H1 (cell line): ENCODE measurements at regions of chr14 and their contacts with region 1.

Region 1: GRCh38 chr14:24431569-24432258 is 2.0 kb downstream of the KHNYN start:
- DNase-seq: peak; percentile 95 to 96
- H3K4me3 ChIP-seq: peak overlapping the region in 1 of 4 experiments; percentile 76; a peak in 2 of 8 replicates
- H3K27ac ChIP-seq: no peak overlapping the region
- H3K4me1 ChIP-seq: peaks cover 6 to 21% (median 15%) of the 10 kb centered on the region in 4 experiments
- H3K27me3 ChIP-seq: peaks cover 0 to 17% (median 1%) of the 10 kb centered on the region in 4 experiments; a peak in 3 of 7 replicates
- CTCF ChIP-seq: peak; percentile 87 to 100 (median 99)
- EP300 ChIP-seq: no peak
- POLR2A ChIP-seq: no peak
- RAD21 ChIP-seq: peak; percentile 96 to 98

Region 2: GRCh38 chr14:24332268-24332993 is 99.3 kb before region 1 on chr14:
- CTCF ChIA-PET with region 1: interaction called, 664 read pairs
- POLR2A ChIA-PET with region 1: interaction called, 46 read pairs
- DNase-seq: peak; percentile 34 to 89
- H3K4me3 ChIP-seq: peak overlapping the region; percentile 32 to 62 (median 52)
- H3K27ac ChIP-seq: no peak overlapping the region
- H3K4me1 ChIP-seq: peaks cover 0 to 16% (median 9%) of the 10 kb centered on the region in 4 experiments; a peak in 5 of 7 replicates
- H3K27me3 ChIP-seq: peaks cover 39 to 85% (median 59%) of the 10 kb centered on the region in 4 experiments
- CTCF ChIP-seq: peak in 2 of 3 experiments; percentile 56 to 79; a peak in 3 of 4 replicates
- EP300 ChIP-seq: no peak
- POLR2A ChIP-seq: no peak
- RAD21 ChIP-seq: peak; percentile 50 to 54

Region 3: GRCh38 chr14:24366721-24367513 is 64.8 kb before region 1 on chr14:
- CTCF ChIA-PET with region 1: interaction called, 207 read pairs
- POLR2A ChIA-PET with region 1: interaction called, 14 read pairs
- DNase-seq: peak in 1 of 2 experiments; percentile 94
- H3K4me3 ChIP-seq: peak overlapping the region; percentile 48 to 100 (median 75)
- H3K27ac ChIP-seq: peak overlapping the region; percentile 28; the same call in 1 of the 2 replicates
- H3K4me1 ChIP-seq: peaks cover 0 to 10% (median 6%) of the 10 kb centered on the region in 4 experiments; a peak in 5 of 7 replicates
- H3K27me3 ChIP-seq: peaks cover 0 to 3% (median 2%) of the 10 kb centered on the region in 4 experiments; a peak in 2 of 7 replicates
- CTCF ChIP-seq: no peak
- EP300 ChIP-seq: no peak
- POLR2A ChIP-seq: no peak
- RAD21 ChIP-seq: no peak

Region 4: GRCh38 chr14:24392325-24393091 is 39.2 kb before region 1 on chr14:
- CTCF ChIA-PET with region 1: interaction called, 15 read pairs
- POLR2A ChIA-PET with region 1: interaction called, 4 read pairs
- DNase-seq: no peak
- H3K4me3 ChIP-seq: no peak overlapping the region
- H3K27ac ChIP-seq: no peak overlapping the region
- H3K4me1 ChIP-seq: peaks cover 0 to 5% (median 0%) of the 10 kb centered on the region in 4 experiments; a peak in 2 of 7 replicates
- H3K27me3 ChIP-seq: peaks cover 0 to 3% (median 1%) of the 10 kb centered on the region in 4 experiments; a peak in 2 of 7 replicates
- CTCF ChIP-seq: peak in 1 of 3 experiments; percentile 26; a peak in 1 of 4 replicates
- EP300 ChIP-seq: no peak
- POLR2A ChIP-seq: no peak
- RAD21 ChIP-seq: no peak

Region 5: GRCh38 chr14:24418492-24418873 is 13.2 kb before region 1 on chr14:
- CTCF ChIA-PET with region 1: interaction called, 101 read pairs
- POLR2A ChIA-PET with region 1: interaction called, 28 read pairs
- DNase-seq: no peak
- H3K4me3 ChIP-seq: no peak overlapping the region
- H3K27ac ChIP-seq: no peak overlapping the region
- H3K4me1 ChIP-seq: no peaks in the 10 kb centered on the region
- H3K27me3 ChIP-seq: peaks cover 0 to 6% (median 4%) of the 10 kb centered on the region in 4 experiments; a peak in 4 of 7 replicates
- CTCF ChIP-seq: no peak
- EP300 ChIP-seq: no peak
- POLR2A ChIP-seq: no peak
- RAD21 ChIP-seq: no peak

Region 6: DNA sequence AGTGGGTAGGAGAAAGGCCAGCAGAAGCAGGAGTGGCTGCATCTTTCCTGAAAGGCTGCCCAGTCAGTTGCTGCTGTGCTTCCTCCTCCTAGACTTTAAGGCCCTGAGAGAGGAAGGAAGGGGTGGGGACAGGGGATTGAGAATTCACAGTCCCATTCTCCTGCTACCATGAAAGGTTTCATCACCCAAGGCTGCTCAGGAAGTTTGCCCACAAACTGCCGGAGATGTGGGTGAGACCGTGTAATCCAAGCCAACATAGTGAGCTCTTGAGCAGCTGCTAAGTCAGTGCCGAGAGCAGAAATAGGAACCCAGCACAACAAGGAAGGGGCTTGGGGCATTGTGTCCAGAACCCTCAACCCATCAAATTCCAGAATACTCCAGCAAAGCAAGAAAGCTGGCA is 144.5 kb after region 1 on chr14 and contains the start of gene CTSG:
- CTCF ChIA-PET with region 1: no interaction called
- POLR2A ChIA-PET with region 1: no interaction called
- DNase-seq: no peak
- H3K4me3 ChIP-seq: no peak within 1 kb of the TSS
- H3K27ac ChIP-seq: no peak within 1 kb of the TSS
- H3K4me1 ChIP-seq: peaks cover 0 to 5% (median 0%) of the 10 kb centered on the region in 4 experiments; a peak in 1 of 7 replicates
- H3K27me3 ChIP-seq: no peaks in the 10 kb centered on the region
- CTCF ChIP-seq: no peak
- EP300 ChIP-seq: no peak
- POLR2A ChIP-seq: no peak
- RAD21 ChIP-seq: no peak
- total RNA-seq, gene CTSG: not detected in 2 replicates